ENCODE measurements at regions of chr16 and their contacts with region 1.

Region 1: DNA sequence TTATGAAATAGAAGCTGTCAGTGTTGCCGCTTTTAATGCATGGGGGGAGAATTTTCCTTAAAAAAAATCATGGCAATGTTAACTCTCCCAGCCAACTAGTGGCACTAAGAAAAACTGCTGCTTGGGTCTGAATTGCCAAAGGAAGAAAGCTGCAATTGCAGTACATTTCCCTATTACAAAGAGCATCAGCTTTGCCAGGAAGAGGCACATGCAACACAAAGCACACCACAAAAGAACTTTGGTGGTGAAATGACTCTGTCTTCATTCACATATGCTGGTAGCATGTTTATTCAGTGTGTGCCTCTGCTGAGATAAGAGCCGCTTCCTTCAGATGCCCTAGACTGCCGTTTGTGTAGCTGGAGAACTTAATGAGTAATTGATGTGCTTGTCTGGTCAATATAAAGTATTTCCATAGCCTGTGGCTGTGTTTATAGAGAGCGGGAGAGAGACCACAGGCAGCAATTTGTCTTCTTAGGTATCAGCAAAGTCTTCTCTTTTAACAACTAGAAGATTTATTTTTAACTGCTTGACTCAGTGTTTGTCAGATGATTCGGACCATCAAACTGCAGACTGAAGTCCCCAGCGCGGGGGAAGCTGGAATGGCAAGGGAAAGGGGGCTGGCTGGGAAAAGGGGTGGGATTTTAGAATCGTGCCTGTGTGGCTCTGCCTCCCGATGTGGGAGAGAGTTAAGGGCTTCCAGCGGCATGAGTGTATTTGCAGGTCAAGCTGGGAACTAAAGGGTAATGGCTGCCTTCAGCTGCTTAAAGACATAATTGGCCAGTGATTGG is 115.1 kb downstream of the MRTFB start:
- DNase-seq: no peak
- ATAC-seq: peak; percentile 67; the same call in 1 of the 2 replicates
- H3K4me3 ChIP-seq: no peak overlapping the region; a peak in 1 of 4 replicates
- H3K27ac ChIP-seq: peak overlapping the region; percentile 40
- H3K4me1 ChIP-seq: peaks cover 27% of the 10 kb centered on the region
- H3K27me3 ChIP-seq: no peaks in the 10 kb centered on the region
- CTCF ChIP-seq: peak; percentile 76

Region 2: DNA sequence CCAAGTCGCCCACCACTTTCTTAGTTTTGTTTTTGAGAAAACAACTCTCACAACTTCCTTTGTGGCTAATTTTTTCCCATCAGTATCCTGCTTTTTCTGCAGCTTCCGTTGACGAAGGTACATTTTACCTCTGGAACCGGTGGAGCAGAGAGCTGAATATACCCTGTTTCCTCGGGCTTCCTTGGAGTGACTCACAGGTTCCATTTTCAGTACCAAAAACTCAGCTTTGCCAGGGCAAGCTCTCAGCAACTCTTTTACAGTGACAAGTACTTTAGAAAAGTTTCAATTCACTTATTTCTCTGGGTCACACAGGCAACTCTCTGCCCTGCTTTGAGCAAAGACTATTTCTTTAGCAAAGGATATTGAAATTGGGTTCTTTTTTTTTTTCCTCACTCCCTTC is 1890.8 kb before region 1 on chr16:
- CTCF ChIA-PET with region 1: no interaction called
- POLR2A ChIA-PET with region 1: interaction called, 16 read pairs
- in situ Hi-C with region 1: no loop called
- intact Hi-C with region 1: no loop called
- DNase-seq: no peak
- ATAC-seq: no peak
- H3K4me3 ChIP-seq: no peak overlapping the region
- H3K27ac ChIP-seq: no peak overlapping the region
- H3K4me1 ChIP-seq: no peaks in the 10 kb centered on the region
- H3K27me3 ChIP-seq: no peaks in the 10 kb centered on the region
- CTCF ChIP-seq: no peak

Region 3: DNA sequence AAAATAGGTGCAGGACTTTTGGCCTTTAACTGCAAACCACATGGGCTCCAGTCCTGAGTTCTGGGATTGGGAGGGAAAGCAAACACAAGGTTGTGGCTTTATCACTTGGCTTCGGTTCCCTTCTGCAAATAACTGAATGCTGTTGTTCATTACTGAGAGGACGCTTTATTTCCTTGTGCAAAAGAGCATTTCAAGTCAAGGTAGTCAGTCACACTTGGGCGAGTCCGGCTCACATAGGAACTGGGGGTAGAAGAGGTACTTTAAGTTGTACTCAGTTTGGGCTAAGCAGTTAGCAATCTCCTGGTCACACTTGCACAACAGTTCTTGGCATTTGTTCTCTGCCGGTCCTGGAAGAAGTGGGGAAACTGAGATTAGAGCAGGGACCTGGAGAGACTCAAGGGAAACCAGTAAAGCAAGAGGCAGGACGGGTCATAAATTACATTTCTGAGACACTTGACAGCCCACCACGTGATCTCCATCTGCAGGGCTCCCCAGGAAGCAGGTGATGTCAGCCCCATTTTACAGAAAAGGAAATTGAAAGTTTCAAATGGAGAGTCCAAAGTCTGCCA is 486.3 kb after region 1 on chr16:
- CTCF ChIA-PET with region 1: no interaction called
- POLR2A ChIA-PET with region 1: no interaction called
- in situ Hi-C with region 1: no loop called
- intact Hi-C with region 1: no loop called
- DNase-seq: no peak
- ATAC-seq: no peak
- H3K4me3 ChIP-seq: no peak overlapping the region
- H3K27ac ChIP-seq: no peak overlapping the region
- H3K4me1 ChIP-seq: no peaks in the 10 kb centered on the region
- H3K27me3 ChIP-seq: no peaks in the 10 kb centered on the region
- CTCF ChIP-seq: no peak